ENCODE measurements at regions of chr13 and their contacts with region 1.

Region 1: GRCh38 chr13:99436686-99437416 is 64.4 kb upstream of the TM9SF2 start:
- DNase-seq: peak; percentile 58 to 91 (median 81)
- ATAC-seq: peak; percentile 84 to 92 (median 86)
- H3K4me3 ChIP-seq: peak overlapping the region in 1 of 4 donors; percentile 20
- H3K27ac ChIP-seq: no peak overlapping the region
- H3K4me1 ChIP-seq: no peaks in the 10 kb centered on the region
- H3K27me3 ChIP-seq: peaks cover 0 to 3% (median 0%) of the 10 kb centered on the region in 4 donors
- CTCF ChIP-seq: peak; percentile 99 to 100 (median 100)

Region 2: DNA sequence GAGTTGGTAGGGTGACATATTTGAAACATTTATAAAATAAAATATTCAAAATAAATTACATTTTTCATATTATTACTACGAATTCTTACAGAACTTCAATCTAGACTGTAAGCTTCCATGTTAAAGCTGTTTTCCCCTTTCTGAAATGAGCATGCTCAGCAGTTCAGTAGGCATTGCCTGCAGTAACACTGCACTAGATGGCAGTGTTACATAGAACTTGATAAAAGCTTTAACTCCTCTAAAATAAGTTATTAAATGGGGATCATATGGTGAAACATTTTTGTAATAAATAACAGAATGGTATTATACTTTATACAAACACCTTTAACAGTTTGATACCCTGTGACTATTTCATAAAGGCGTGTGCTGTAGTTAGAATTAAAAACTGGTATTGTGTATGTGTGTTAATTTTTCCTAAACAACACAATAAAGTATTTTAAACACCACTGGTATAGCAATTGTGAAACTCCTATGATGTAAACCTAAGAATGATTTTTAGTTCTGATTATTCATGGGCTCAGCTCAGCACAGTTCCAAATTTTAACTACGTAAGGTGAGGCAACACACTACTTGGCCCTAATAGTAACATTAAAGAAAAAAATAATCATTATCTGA is 167.1 kb before region 1 on chr13:
- intact Hi-C with region 1: loop called in 2 of 3 experiments (anchors 5 to 10 kb)
- DNase-seq: no peak
- ATAC-seq: peak in 3 of 4 donors; percentile 79 to 87 (median 84)
- H3K4me3 ChIP-seq: no peak overlapping the region
- H3K27ac ChIP-seq: no peak overlapping the region
- H3K4me1 ChIP-seq: no peaks in the 10 kb centered on the region
- H3K27me3 ChIP-seq: no peaks in the 10 kb centered on the region
- CTCF ChIP-seq: peak in 3 of 4 donors; percentile 21 to 23 (median 22)

Region 3: GRCh38 chr13:99617474-99618255 is 180.8 kb after region 1 on chr13:
- intact Hi-C with region 1: no loop called
- DNase-seq: no peak
- ATAC-seq: peak in 1 of 4 donors; percentile 34
- H3K4me3 ChIP-seq: no peak overlapping the region
- H3K27ac ChIP-seq: no peak overlapping the region
- H3K4me1 ChIP-seq: no peaks in the 10 kb centered on the region
- H3K27me3 ChIP-seq: no peaks in the 10 kb centered on the region
- CTCF ChIP-seq: no peak